T-cell (primary cell): ENCODE measurements at regions of chr9 and their contacts with region 1.

Region 1: DNA sequence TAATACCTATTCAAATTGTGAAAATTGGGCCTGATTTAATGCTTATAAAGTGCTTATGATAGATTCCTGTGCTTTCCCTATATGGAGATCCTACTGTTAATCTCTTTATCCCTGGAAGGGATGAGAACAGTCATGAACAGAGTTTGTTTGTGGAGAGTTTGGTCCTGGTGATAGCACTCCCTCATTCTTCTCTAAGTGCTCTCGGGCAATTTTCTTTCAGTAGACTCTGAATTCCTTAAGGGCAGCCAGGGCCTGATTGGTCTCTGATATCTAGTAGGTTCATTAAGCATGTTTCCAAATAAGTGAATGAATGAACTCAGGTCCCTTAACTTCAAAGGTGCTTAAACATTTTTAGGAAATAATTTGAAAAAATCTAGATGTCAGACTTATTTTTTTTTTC is 104.3 kb upstream of the TUT7 start:
- DNase-seq: no peak
- ATAC-seq: no peak
- H3K4me3 ChIP-seq: no peak overlapping the region
- H3K4me3 Mint-ChIP-seq: no peak overlapping the region
- H3K27ac ChIP-seq: no peak overlapping the region
- H3K27ac Mint-ChIP-seq: no peak overlapping the region
- H3K4me1 ChIP-seq: no peaks in the 10 kb centered on the region
- H3K4me1 Mint-ChIP-seq: no peaks in the 10 kb centered on the region
- H3K27me3 ChIP-seq: no peaks in the 10 kb centered on the region
- H3K27me3 Mint-ChIP-seq: peaks cover 0 to 6% of the 10 kb centered on the region in 2 donors

Region 2: GRCh38 chr9:87107072-87107471 is 648.6 kb after region 1 on chr9:
- CTCF ChIA-PET with region 1: interaction called in 1 of 2 experiments, 11 read pairs
- POLR2A ChIA-PET with region 1: no interaction called
- DNase-seq: peak in 1 of 35 experiments; percentile 7
- ATAC-seq: no peak
- H3K4me3 ChIP-seq: no peak overlapping the region
- H3K4me3 Mint-ChIP-seq: no peak overlapping the region
- H3K27ac ChIP-seq: no peak overlapping the region
- H3K27ac Mint-ChIP-seq: no peak overlapping the region
- H3K4me1 ChIP-seq: no peaks in the 10 kb centered on the region
- H3K4me1 Mint-ChIP-seq: no peaks in the 10 kb centered on the region
- H3K27me3 ChIP-seq: peaks cover 0 to 2% of the 10 kb centered on the region in 2 experiments
- H3K27me3 Mint-ChIP-seq: peaks cover 11 to 13% of the 10 kb centered on the region in 2 donors